Activated CD4-positive, alpha-beta T cell treated with anti-CD3 and anti-CD28 coated beads for 36 hours (primary cell): ENCODE measurements at regions of chrX and their contacts with region 1.

Region 1: GRCh38 chrX:2707334-2707760 is 16.3 kb downstream of the CD99 start:
- DNase-seq: peak; percentile 86
- ATAC-seq: peak; percentile 61
- H3K4me3 Mint-ChIP-seq: peak overlapping the region; percentile 22
- H3K27ac Mint-ChIP-seq: peak overlapping the region; percentile 97
- H3K4me1 Mint-ChIP-seq: peaks cover 90% of the 10 kb centered on the region
- H3K27me3 Mint-ChIP-seq: no peaks in the 10 kb centered on the region

Region 2: DNA sequence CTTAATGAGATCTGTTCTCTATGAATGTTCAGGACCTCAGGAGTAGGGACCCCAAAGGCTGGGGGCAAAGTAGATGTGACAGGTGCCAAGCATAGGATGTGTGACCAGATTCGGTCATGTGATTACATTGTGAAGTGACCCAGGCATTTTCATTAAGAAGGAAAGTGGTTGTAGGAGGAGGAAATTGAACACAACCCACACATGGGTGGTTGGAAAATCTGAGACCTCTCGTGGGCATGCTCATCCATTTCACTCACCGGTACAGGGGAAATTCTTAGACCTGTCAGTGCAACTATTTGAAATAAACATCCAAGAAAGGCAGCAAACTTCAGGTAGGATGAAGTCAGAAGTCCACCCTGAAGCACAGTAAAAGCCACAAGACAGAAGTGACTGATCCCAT is 59.7 kb before region 1 on chrX:
- CTCF ChIA-PET with region 1: no interaction called
- POLR2A ChIA-PET with region 1: no interaction called
- intact Hi-C with region 1: loop called in 1 of 2 experiments (anchors 1 kb)
- DNase-seq: peak; percentile 49
- ATAC-seq: peak; percentile 57
- H3K4me3 Mint-ChIP-seq: no peak overlapping the region
- H3K27ac Mint-ChIP-seq: peak overlapping the region; percentile 48
- H3K4me1 Mint-ChIP-seq: peaks cover 17% of the 10 kb centered on the region
- H3K27me3 Mint-ChIP-seq: no peaks in the 10 kb centered on the region

Region 3: GRCh38 chrX:2690856-2691542 is 16.3 kb before region 1 on chrX and contains the start of gene CD99:
- CTCF ChIA-PET with region 1: no interaction called
- POLR2A ChIA-PET with region 1: no interaction called
- intact Hi-C with region 1: loop called (anchors 1 kb)
- DNase-seq: peak; percentile 91
- ATAC-seq: peak; percentile 79
- H3K4me3 Mint-ChIP-seq: peak within 1 kb of the TSS; percentile 95
- H3K27ac Mint-ChIP-seq: peak within 1 kb of the TSS; percentile 100
- H3K4me1 Mint-ChIP-seq: peaks cover 34% of the 10 kb centered on the region
- H3K27me3 Mint-ChIP-seq: no peaks in the 10 kb centered on the region
- total RNA-seq, gene CD99: 169 to 216 TPM

Region 4: GRCh38 chrX:2696698-2697215 is 10.6 kb before region 1 on chrX:
- CTCF ChIA-PET with region 1: no interaction called
- POLR2A ChIA-PET with region 1: no interaction called
- intact Hi-C with region 1: loop called (anchors 1 kb)
- DNase-seq: peak; percentile 72
- ATAC-seq: peak; percentile 81
- H3K4me3 Mint-ChIP-seq: peak overlapping the region; percentile 95
- H3K27ac Mint-ChIP-seq: peak overlapping the region; percentile 92
- H3K4me1 Mint-ChIP-seq: peaks cover 86% of the 10 kb centered on the region
- H3K27me3 Mint-ChIP-seq: no peaks in the 10 kb centered on the region

Region 5: GRCh38 chrX:2933125-2933894 is 226.0 kb after region 1 on chrX:
- CTCF ChIA-PET with region 1: no interaction called
- POLR2A ChIA-PET with region 1: no interaction called
- intact Hi-C with region 1: no loop called
- DNase-seq: no peak
- ATAC-seq: no peak
- H3K4me3 Mint-ChIP-seq: no peak overlapping the region
- H3K27ac Mint-ChIP-seq: no peak overlapping the region
- H3K4me1 Mint-ChIP-seq: no peaks in the 10 kb centered on the region
- H3K27me3 Mint-ChIP-seq: peaks cover 6% of the 10 kb centered on the region

Region 6: DNA sequence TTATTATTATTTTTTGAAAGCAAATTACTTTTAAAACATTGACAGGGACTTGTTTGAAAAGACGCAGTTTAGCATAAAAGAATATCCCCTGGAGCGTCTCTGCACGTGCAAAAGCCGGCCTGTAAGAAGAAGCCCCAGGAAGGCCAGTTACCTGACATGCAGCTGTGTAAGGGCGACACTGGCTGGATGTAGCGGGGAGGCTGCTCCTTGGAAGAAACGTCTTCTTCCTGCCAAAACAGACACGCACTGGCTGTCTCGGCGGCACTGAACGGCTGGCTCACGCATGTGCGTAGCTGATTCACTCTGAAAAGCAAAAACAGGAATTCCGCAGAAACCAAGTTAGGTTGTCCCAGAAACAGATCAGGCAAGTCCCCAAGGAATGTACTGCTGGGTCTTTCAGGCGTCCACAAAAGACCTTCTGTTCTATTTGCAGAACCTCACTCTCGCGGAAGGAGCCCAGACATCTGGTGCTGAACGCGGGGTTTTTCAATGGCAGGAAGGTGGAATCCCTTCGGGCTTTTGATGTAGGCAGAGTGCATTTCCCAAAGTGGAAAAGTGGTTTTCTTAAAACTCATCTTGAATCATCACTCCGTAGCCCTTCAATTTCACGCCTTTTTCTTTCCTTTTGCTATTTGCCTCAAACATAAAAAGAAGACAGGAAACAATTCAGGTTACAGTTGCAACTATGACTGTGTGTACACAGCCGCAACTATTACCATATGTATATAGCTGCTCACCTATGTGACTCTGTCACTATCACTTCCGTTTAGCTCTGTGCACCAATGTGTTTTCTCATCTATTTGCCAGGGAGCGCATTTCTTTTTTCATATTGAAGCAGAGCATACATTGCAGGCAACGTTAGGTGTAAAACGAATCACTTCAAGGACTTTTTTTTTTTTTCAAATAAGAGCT is 260.9 kb after region 1 on chrX:
- CTCF ChIA-PET with region 1: no interaction called
- POLR2A ChIA-PET with region 1: no interaction called
- intact Hi-C with region 1: loop called (anchors 5 kb)
- DNase-seq: peak; percentile 46
- ATAC-seq: peak; percentile 92
- H3K4me3 Mint-ChIP-seq: peak overlapping the region; percentile 44
- H3K27ac Mint-ChIP-seq: no peak overlapping the region
- H3K4me1 Mint-ChIP-seq: peaks cover 5% of the 10 kb centered on the region
- H3K27me3 Mint-ChIP-seq: no peaks in the 10 kb centered on the region

Region 7: GRCh38 chrX:3371163-3371562 is 663.8 kb after region 1 on chrX:
- CTCF ChIA-PET with region 1: no interaction called
- POLR2A ChIA-PET with region 1: no interaction called
- intact Hi-C with region 1: no loop called
- DNase-seq: no peak
- ATAC-seq: no peak
- H3K4me3 Mint-ChIP-seq: no peak overlapping the region
- H3K27ac Mint-ChIP-seq: no peak overlapping the region
- H3K4me1 Mint-ChIP-seq: no peaks in the 10 kb centered on the region
- H3K27me3 Mint-ChIP-seq: no peaks in the 10 kb centered on the region